ENCODE measurements at regions of chr13 and their contacts with region 1.

Region 1: DNA sequence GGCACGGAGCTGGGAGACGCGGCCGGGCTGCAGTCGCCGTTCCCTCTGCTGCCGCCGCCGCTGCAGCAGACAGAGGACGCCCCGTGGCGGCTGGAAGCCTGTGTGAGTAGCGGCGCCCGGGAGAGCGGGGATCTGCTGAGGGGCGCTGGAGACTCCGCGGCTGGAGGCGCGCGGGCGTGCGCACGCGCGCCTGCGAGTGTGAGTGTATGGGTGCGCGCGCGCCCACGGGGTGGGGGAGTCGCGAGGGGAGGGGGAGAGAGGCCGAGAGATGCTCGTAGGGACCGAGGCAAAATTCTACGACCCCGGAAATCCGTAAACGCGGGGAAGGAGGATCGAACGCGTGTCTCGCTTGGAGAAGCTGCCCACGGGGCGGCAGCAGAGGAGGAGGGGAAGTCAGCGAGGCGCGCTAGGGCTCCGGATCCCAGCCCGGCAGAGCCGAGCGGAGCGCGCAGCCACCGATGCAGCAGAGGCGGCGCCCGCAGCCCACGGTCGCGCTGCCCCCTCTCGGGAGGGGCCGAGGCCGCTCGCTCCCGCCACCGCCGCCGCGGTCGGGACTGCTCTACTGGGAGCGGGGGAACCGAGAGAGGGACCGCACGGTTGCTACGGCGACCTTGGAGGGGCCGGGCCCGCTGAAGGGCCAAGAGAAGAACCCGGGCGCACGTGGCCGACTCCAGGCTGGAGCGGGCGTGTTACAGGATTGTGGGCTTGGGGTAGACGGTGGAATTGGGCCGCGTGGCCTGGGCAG is at the start of gene ENOX1:
- DNase-seq: peak; percentile 78
- ATAC-seq: peak; percentile 82 to 87
- total RNA-seq, gene ENOX1: 1.7 to 2.0 TPM

Region 2: GRCh38 chr13:43303033-43303729 is 483.8 kb before region 1 on chr13:
- intact Hi-C with region 1: loop called in 1 of 2 experiments (anchors 5 kb)
- DNase-seq: peak; percentile 71
- ATAC-seq: peak; percentile 76 to 89

Region 3: GRCh38 chr13:43865892-43866291 is 78.9 kb after region 1 on chr13:
- intact Hi-C with region 1: no loop called
- DNase-seq: no peak
- ATAC-seq: no peak